MCF 10A (cell line): ENCODE measurements at regions of chr3 and their contacts with region 1.

Region 1: GRCh38 chr3:134473868-134474546 is 11.8 kb downstream of the ANAPC13 start:
- DNase-seq: peak; percentile 90
- H3K4me3 Mint-ChIP-seq: no peak overlapping the region
- H3K27ac Mint-ChIP-seq: no peak overlapping the region
- H3K4me1 Mint-ChIP-seq: peaks cover 31% of the 10 kb centered on the region
- H3K27me3 Mint-ChIP-seq: no peaks in the 10 kb centered on the region
- CTCF ChIP-seq: peak; percentile 60

Region 2: DNA sequence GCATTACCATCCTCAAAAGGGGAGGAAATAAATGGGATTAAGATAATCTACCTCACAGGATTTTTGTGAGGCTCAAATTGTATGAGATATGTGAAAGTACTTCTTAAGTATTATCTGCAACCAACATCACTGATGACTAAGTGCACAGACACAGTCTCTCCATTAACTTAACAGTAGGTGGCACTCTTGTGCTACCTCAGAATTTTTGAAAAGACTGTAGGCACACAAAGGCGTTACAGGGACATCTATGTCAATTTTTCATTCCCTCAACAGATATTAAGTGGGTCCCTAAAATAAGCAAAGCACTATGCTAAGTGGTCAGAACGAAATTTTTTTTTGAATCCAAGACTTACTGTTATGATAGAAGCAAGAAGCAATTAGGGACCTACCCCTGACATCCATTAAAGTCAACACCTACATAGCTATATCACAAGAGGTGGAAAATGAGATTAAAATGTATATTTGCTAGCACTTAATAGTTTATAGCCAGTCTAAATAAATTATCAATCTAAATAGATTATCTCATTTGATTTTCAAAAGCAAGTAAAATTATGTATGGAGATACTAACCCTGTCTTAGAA is 276.2 kb before region 1 on chr3:
- CTCF ChIA-PET with region 1: interaction called, 7 read pairs
- POLR2A ChIA-PET with region 1: interaction called, 4 read pairs
- intact Hi-C with region 1: loop called (anchors 1 kb)
- DNase-seq: peak; percentile 76
- H3K4me3 Mint-ChIP-seq: no peak overlapping the region
- H3K27ac Mint-ChIP-seq: peak overlapping the region; percentile 20
- H3K4me1 Mint-ChIP-seq: peaks cover 29% of the 10 kb centered on the region
- H3K27me3 Mint-ChIP-seq: no peaks in the 10 kb centered on the region
- CTCF ChIP-seq: peak; percentile 83

Region 3: DNA sequence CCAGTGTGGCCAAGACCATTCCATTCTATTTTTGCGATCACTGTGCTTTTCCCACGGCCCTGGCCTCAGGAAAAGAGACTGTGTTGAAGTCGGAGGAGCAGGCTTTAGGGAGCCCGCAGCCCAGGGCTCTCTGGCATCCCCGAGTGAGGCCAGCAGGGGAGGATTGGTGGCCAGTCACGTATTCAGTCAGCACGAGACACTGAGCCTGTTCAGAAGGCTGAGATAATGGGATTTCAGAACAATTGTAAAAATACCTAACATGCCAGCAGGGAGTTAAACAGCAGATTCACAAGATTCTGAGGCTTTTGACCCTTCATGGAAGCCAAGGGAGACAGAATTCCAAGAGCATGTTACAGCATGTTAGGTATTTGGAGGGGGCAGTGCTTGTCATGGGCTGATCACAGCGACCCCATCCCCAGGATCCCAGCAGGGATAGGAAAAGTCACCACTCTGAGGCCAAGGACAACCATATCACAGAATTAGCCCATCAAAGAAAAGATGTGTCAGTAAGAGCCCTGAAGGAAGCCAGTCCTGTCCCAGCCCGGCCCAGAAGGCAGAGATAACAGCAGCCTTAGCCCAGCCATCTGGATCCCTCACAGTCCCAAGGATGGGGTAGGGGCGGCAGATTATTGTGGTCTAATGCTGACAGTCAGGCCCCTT is 140.4 kb before region 1 on chr3:
- CTCF ChIA-PET with region 1: interaction called, 12 read pairs
- POLR2A ChIA-PET with region 1: interaction called, 7 read pairs
- intact Hi-C with region 1: no loop called
- DNase-seq: no peak
- H3K4me3 Mint-ChIP-seq: no peak overlapping the region
- H3K27ac Mint-ChIP-seq: peak overlapping the region; percentile 84
- H3K4me1 Mint-ChIP-seq: peaks cover 83% of the 10 kb centered on the region
- H3K27me3 Mint-ChIP-seq: no peaks in the 10 kb centered on the region
- CTCF ChIP-seq: no peak

Region 4: GRCh38 chr3:134364061-134364935 is 109.7 kb before region 1 on chr3:
- CTCF ChIA-PET with region 1: interaction called, 449 read pairs
- POLR2A ChIA-PET with region 1: interaction called, 55 read pairs
- intact Hi-C with region 1: no loop called
- DNase-seq: peak; percentile 96
- H3K4me3 Mint-ChIP-seq: peak overlapping the region; percentile 29
- H3K27ac Mint-ChIP-seq: peak overlapping the region; percentile 28
- H3K4me1 Mint-ChIP-seq: peaks cover 30% of the 10 kb centered on the region
- H3K27me3 Mint-ChIP-seq: no peaks in the 10 kb centered on the region
- CTCF ChIP-seq: no peak

Region 5: GRCh38 chr3:134449277-134449676 is 24.7 kb before region 1 on chr3:
- CTCF ChIA-PET with region 1: interaction called, 29 read pairs
- POLR2A ChIA-PET with region 1: interaction called, 4 read pairs
- intact Hi-C with region 1: no loop called
- DNase-seq: peak; percentile 67
- H3K4me3 Mint-ChIP-seq: no peak overlapping the region
- H3K27ac Mint-ChIP-seq: no peak overlapping the region
- H3K4me1 Mint-ChIP-seq: peaks cover 37% of the 10 kb centered on the region
- H3K27me3 Mint-ChIP-seq: no peaks in the 10 kb centered on the region
- CTCF ChIP-seq: peak; percentile 47

Region 6: GRCh38 chr3:135348690-135349089 is 874.7 kb after region 1 on chr3:
- CTCF ChIA-PET with region 1: no interaction called
- POLR2A ChIA-PET with region 1: no interaction called
- intact Hi-C with region 1: no loop called
- DNase-seq: no peak
- H3K4me3 Mint-ChIP-seq: no peak overlapping the region
- H3K27ac Mint-ChIP-seq: no peak overlapping the region
- H3K4me1 Mint-ChIP-seq: no peaks in the 10 kb centered on the region
- H3K27me3 Mint-ChIP-seq: no peaks in the 10 kb centered on the region
- CTCF ChIP-seq: no peak